ENCODE measurements at regions of chr4 and their contacts with region 1.

Region 1: DNA sequence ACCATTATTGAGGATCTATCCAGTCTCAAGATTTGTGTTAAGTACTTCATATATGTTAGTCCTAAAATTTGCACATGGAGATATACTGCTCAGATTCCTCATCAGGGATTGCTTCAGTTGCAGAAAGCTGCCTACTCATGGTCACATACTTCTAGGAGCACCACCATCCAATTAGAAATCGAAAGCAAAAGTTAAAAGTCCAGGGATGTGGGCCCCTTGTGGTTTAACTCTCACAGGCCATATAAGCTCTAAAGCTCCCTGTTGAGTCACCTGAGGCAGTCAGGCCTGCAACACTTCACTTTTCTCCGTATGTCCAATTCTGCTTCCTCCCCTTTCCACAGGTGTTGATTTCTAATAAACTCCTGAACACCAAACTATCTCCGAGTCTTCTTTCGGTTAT is 84.2 kb downstream of the CNOT6L start:
- DNase-seq: no peak
- ATAC-seq: no peak
- H3K4me3 ChIP-seq: no peak overlapping the region
- H3K27ac ChIP-seq: no peak overlapping the region
- H3K4me1 ChIP-seq: peaks cover 6% of the 10 kb centered on the region
- H3K27me3 ChIP-seq: no peaks in the 10 kb centered on the region
- CTCF ChIP-seq: no peak

Region 2: GRCh38 chr4:77862478-77863216 is 127.7 kb after region 1 on chr4 and contains the start of gene MRPL1:
- intact Hi-C with region 1: loop called in 1 of 2 experiments (anchors 10 kb)
- DNase-seq: peak; percentile 86 to 94
- ATAC-seq: peak; percentile 95 to 97 (median 96)
- H3K4me3 ChIP-seq: peak within 1 kb of the TSS; percentile 95
- H3K27ac ChIP-seq: peak within 1 kb of the TSS; percentile 99
- H3K4me1 ChIP-seq: peaks cover 10% of the 10 kb centered on the region
- H3K27me3 ChIP-seq: no peaks in the 10 kb centered on the region
- CTCF ChIP-seq: no peak
- total RNA-seq, gene MRPL1: 28.1 to 49.9 (median 37.8) TPM

Region 3: GRCh38 chr4:78121338-78121904 is 386.5 kb after region 1 on chr4:
- intact Hi-C with region 1: no loop called
- DNase-seq: peak in 1 of 2 donors; percentile 74
- ATAC-seq: peak; percentile 83 to 99 (median 96)
- H3K4me3 ChIP-seq: no peak overlapping the region
- H3K27ac ChIP-seq: peak overlapping the region; percentile 62
- H3K4me1 ChIP-seq: peaks cover 13% of the 10 kb centered on the region
- H3K27me3 ChIP-seq: no peaks in the 10 kb centered on the region
- CTCF ChIP-seq: no peak